ENCODE measurements at regions of chr14 and their contacts with region 1.

Region 1: GRCh38 chr14:81220830-81221578 is at the start of gene GTF2A1:
- DNase-seq: peak; percentile 92
- ATAC-seq: peak; percentile 70
- H3K4me3 Mint-ChIP-seq: peak within 1 kb of the TSS; percentile 98
- H3K27ac Mint-ChIP-seq: peak within 1 kb of the TSS; percentile 100
- H3K4me1 Mint-ChIP-seq: peaks cover 35% of the 10 kb centered on the region
- H3K27me3 Mint-ChIP-seq: no peaks in the 10 kb centered on the region
- CTCF ChIP-seq: no peak
- total RNA-seq, gene GTF2A1: 38.5 and 40.9 TPM in 2 replicates

Region 2: DNA sequence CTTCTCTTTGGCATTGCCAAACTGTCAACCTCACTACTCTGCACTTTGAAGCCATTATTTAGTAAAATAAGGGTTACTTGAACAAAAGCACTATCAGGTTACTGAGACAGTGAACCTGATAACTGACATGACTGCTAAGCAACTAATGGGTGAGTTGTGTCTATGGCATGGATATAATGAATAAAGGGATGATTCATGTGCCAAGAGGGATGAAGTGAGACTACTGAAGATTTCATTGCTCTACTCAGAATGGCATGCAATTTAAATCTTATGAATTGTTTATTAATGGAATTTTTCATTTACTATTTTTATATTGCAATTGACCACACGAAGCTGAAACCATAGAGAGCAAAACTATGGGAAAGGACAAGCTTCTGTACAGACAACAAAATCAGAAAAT is 353.9 kb before region 1 on chr14:
- CTCF ChIA-PET with region 1: no interaction called
- POLR2A ChIA-PET with region 1: no interaction called
- intact Hi-C with region 1: no loop called
- DNase-seq: no peak
- ATAC-seq: no peak
- H3K4me3 Mint-ChIP-seq: no peak overlapping the region
- H3K27ac Mint-ChIP-seq: no peak overlapping the region
- H3K4me1 Mint-ChIP-seq: no peaks in the 10 kb centered on the region
- H3K27me3 Mint-ChIP-seq: no peaks in the 10 kb centered on the region
- CTCF ChIP-seq: no peak

Region 3: DNA sequence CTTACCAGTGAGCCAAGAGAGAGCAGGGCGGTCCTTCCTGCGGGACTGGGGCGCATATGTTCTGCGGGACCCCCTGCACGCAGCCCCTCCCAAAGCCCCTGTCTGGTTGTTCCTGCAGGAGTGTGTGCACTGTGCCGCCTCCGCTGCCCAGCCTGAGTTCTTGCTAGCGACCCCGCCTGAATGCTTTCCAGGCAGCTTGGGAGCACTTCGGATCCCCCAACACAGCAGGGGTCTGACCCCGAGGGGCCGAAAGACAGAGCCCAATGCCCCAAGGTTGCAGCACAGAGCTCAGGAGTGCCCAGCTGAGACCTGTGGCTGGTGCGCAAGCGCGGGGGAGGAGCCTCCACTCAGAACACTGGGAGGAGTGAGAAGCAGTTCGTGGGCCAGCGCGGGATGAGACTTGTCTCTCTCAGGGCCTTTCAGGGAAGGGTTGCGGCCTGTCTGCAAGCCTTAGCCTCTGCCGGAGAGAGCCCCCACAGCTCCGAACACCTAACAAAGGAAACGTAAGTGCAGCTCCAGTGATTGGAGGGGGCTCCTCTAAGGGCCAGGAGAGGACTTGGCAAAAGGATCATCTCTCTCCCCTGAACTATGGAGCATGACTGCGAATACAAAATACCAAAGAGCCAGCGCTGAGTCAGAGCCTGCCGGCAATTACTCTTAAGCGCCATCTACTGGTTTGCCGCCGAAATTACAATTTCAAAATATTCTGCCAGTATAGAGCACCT is 50.7 kb before region 1 on chr14:
- CTCF ChIA-PET with region 1: interaction called, 4 read pairs
- POLR2A ChIA-PET with region 1: interaction called, 27 read pairs
- intact Hi-C with region 1: loop called (anchors 1 kb)
- DNase-seq: peak; percentile 79
- ATAC-seq: peak; percentile 98
- H3K4me3 Mint-ChIP-seq: peak overlapping the region; percentile 90
- H3K27ac Mint-ChIP-seq: peak overlapping the region; percentile 97
- H3K4me1 Mint-ChIP-seq: peaks cover 42% of the 10 kb centered on the region
- H3K27me3 Mint-ChIP-seq: no peaks in the 10 kb centered on the region
- CTCF ChIP-seq: peak; percentile 49

Region 4: DNA sequence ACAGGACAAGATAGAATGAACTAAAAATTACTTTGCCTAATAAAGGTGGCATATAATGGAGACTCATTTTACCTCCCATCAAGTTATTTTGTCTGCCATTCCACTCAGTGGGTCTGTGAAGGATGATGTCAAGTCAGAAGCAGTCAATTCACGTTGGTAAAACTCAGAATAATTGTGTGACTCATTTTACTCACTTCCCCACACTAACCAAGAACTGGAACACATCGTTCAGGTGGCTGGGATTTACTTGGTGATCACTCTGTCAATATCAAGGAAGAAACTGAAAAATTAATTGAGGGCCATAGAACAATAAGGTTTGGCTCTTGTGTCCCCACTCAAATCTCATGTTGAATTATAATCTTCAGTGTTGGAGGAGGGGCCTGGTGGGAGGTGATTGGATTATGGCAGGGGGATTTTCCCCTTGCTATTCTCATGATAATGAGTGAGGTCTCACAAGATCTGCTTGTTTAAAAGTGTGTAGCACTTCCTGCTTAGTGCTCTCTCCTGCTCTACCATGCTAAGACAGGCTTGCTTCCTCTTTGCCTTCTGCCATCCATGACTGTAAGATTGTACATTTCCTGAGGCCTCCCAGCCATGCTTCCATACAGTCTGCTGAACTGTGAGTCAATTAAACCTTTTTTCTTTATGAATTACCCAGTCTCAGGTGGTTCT is 35.4 kb after region 1 on chr14:
- CTCF ChIA-PET with region 1: no interaction called
- POLR2A ChIA-PET with region 1: no interaction called
- intact Hi-C with region 1: loop called (anchors 1 kb)
- DNase-seq: no peak
- ATAC-seq: peak; percentile 90
- H3K4me3 Mint-ChIP-seq: peak overlapping the region; percentile 52
- H3K27ac Mint-ChIP-seq: peak overlapping the region; percentile 73
- H3K4me1 Mint-ChIP-seq: peaks cover 19% of the 10 kb centered on the region
- H3K27me3 Mint-ChIP-seq: peaks cover 10% of the 10 kb centered on the region
- CTCF ChIP-seq: no peak

Region 5: DNA sequence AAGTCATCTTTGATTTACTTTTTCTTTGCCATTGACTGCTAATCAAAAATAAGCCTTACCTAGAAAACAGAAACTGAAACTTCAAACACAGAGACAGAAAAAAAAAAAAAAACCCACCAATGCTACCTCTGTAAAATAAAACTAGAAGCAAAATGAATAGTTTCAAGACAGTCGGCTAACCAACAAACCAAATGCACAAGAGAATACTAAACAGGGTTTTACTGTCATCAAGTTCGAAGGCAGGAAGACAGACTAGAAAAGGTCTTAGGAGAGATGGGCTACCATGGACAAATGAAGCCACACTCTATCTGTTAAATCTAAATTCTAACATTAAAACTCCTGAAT is 253.1 kb after region 1 on chr14:
- CTCF ChIA-PET with region 1: no interaction called
- POLR2A ChIA-PET with region 1: interaction called, 14 read pairs
- intact Hi-C with region 1: no loop called
- DNase-seq: no peak
- ATAC-seq: peak; percentile 53
- H3K4me3 Mint-ChIP-seq: peak overlapping the region; percentile 65
- H3K27ac Mint-ChIP-seq: peak overlapping the region; percentile 83
- H3K4me1 Mint-ChIP-seq: peaks cover 51% of the 10 kb centered on the region
- H3K27me3 Mint-ChIP-seq: no peaks in the 10 kb centered on the region
- CTCF ChIP-seq: no peak